Posterior vena cava (tissue), 2 donors: ENCODE measurements at regions of chr2 and their contacts with region 1.

Region 1: GRCh38 chr2:23673830-23674679 is 252.9 kb downstream of the ATAD2B start:
- DNase-seq: no peak

Region 2: GRCh38 chr2:23628926-23629771 is 44.9 kb before region 1 on chr2:
- intact Hi-C with region 1: loop called in 1 of 2 experiments (anchors 2 kb)
- DNase-seq: peak; percentile 71

Region 3: GRCh38 chr2:23824777-23825212 is 150.7 kb after region 1 on chr2:
- intact Hi-C with region 1: no loop called
- DNase-seq: no peak

Region 4: DNA sequence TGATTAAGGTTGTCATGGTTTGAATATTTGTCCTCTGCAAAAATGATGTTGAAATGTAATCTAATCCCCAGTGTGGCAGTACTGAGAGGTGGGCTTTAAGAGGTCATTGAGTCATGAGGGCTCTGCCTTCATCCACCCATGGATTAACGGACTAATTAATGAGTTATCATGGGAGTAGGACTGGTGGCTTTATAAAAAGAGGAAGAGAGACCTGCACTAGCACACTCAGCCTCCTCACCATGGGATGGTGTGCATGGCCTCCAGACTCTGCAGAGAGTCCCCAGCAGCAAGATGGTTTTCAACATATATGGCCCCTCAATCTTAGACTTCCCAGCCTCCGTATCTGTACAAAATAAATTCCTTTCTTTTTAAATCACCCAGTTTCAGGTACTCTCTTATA is 1958.3 kb after region 1 on chr2:
- intact Hi-C with region 1: no loop called
- DNase-seq: no peak